Caco-2 (cell line): ENCODE measurements at regions of chr11 and their contacts with region 1.

Region 1: GRCh38 chr11:82733444-82734119 is at the start of gene FAM181B:
- DNase-seq: peak; percentile 61 to 72
- H3K4me3 ChIP-seq: peak within 1 kb of the TSS; percentile 51
- H3K4me3 Mint-ChIP-seq: peak within 1 kb of the TSS; percentile 73
- H3K27ac Mint-ChIP-seq: no peak within 1 kb of the TSS
- H3K4me1 ChIP-seq: peaks cover 13% of the 10 kb centered on the region; the same call in 1 of the 2 replicates
- H3K4me1 Mint-ChIP-seq: no peaks in the 10 kb centered on the region
- H3K27me3 ChIP-seq: peaks cover 7% of the 10 kb centered on the region
- H3K27me3 Mint-ChIP-seq: peaks cover 50% of the 10 kb centered on the region
- CTCF ChIP-seq: no peak
- total RNA-seq, gene FAM181B: not detected in 2 replicates

Region 2: DNA sequence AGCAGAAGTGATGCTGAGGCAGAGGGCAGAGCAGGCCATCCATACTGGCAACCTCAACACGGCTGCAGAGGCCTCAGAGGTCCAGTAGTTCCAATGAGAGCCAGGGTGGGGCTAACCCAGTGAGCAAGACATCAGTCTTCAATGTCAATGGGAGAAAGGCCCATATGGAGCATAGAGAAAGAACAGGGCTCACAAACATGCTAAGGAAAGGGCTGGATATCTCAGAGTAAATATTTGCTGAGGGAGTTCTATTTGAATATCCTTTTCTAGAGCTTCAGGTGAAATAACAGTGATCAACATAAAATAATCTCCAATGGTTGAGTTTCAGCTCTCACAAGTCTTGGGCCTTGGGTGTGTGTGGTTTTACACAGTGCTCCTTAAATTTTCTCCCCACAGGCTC is 603.4 kb after region 1 on chr11:
- CTCF ChIA-PET with region 1: interaction called, 12 read pairs
- POLR2A ChIA-PET with region 1: no interaction called
- intact Hi-C with region 1: no loop called
- DNase-seq: no peak
- H3K4me3 ChIP-seq: no peak overlapping the region
- H3K4me3 Mint-ChIP-seq: no peak overlapping the region
- H3K27ac Mint-ChIP-seq: no peak overlapping the region
- H3K4me1 ChIP-seq: no peaks in the 10 kb centered on the region
- H3K4me1 Mint-ChIP-seq: peaks cover 5% of the 10 kb centered on the region
- H3K27me3 ChIP-seq: no peaks in the 10 kb centered on the region
- H3K27me3 Mint-ChIP-seq: peaks cover 9% of the 10 kb centered on the region
- CTCF ChIP-seq: no peak